Heart left ventricle (tissue), 16 donors: ENCODE measurements at regions of chr11 and their contacts with region 1.

Region 1: DNA sequence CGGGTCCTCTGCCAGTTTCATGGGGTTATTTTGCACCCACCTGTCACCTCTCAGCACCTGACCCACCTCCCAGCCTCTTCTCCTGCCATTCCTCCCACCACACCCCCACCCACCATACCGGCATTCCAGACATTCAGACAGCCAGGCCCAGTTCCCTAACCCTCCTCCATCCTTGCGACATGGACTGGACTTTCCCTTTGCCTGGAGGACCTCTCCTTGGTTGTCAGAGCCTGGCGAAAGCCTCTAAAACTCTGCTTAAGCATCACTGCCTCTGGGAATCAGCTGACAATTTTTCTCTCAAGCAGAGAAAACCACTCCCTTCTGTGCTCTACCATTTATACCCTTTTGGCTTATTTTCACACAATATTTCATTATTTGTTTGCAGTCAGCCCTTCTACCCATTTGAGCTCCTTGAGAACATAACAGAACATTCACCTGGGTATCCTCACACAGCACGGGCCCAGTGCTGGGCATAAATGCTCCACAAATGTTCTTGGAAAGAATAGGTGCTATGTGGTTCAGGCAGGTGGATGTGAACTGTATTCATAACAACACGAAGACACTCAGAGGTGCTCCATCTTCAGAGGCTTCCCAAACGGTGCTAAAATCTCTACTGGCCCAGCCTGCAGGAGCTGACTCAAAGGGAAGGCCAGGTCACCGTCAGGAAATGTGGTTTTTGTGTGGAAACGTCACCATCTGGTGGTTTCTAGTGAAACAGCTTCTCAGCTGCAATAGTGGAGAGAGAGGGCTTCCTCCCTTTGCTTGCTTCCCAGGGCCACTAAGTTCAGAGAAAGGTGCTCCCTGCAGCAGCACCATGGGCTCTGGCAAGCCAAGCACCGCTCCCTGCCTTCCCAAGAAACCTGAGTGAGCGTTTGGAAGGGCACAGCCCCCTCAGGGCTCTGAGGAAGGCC is 10.4 kb downstream of the SPATA19 start:
- DNase-seq: peak in 2 of 5 donors; percentile 44 to 50
- ATAC-seq: peak in 3 of 4 donors; percentile 69 to 90 (median 85)
- H3K4me3 ChIP-seq: no peak overlapping the region
- H3K27ac ChIP-seq: no peak overlapping the region
- H3K4me1 ChIP-seq: peaks cover 0 to 6% (median 0%) of the 10 kb centered on the region in 12 donors
- H3K27me3 ChIP-seq: peaks cover 0 to 16% (median 0%) of the 10 kb centered on the region in 9 donors
- CTCF ChIP-seq: peak; percentile 16 to 75 (median 65)
- POLR2A ChIP-seq: no peak

Region 2: GRCh38 chr11:133134314-133135173 is 700.4 kb before region 1 on chr11:
- intact Hi-C with region 1: loop called in 8 of 10 experiments (anchors 2 to 10 kb)
- DNase-seq: peak in 4 of 5 donors; percentile 49 to 55 (median 51)
- ATAC-seq: peak in 3 of 4 donors; percentile 72 to 83 (median 80)
- H3K4me3 ChIP-seq: no peak overlapping the region
- H3K27ac ChIP-seq: no peak overlapping the region
- H3K4me1 ChIP-seq: peaks cover 0 to 10% (median 0%) of the 10 kb centered on the region in 12 donors
- H3K27me3 ChIP-seq: peaks cover 0 to 14% (median 0%) of the 10 kb centered on the region in 9 donors
- CTCF ChIP-seq: peak; percentile 75 to 89 (median 82)
- POLR2A ChIP-seq: no peak

Region 3: DNA sequence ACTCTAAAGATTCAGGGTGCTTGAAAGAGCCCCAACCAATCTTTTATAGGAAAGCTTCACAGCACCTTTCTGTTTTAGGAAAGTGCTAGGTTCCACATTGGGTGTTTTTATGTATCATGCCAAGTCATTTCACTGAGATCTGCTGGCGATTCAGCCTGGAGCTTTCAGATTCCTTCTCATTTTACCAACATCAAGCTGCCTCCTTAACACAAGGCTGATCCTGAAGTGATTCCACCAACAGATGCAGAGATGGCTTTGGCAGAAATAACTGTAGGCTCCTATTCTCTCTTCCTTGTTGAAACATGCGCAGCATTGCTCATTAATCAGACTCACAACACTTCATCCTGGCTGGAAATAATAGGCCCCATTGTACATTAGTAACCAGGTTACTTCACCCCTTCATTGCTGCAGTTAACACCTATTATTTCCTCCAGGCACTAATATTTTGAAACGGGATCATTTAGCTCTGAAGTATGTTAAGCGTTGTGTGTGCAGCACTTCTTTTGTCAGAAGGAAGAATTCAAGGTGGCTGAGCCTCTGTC is 391.7 kb before region 1 on chr11:
- intact Hi-C with region 1: no loop called
- DNase-seq: no peak
- ATAC-seq: no peak
- H3K4me3 ChIP-seq: no peak overlapping the region
- H3K27ac ChIP-seq: no peak overlapping the region
- H3K4me1 ChIP-seq: no peaks in the 10 kb centered on the region
- H3K27me3 ChIP-seq: no peaks in the 10 kb centered on the region
- CTCF ChIP-seq: no peak
- POLR2A ChIP-seq: no peak

Region 4: DNA sequence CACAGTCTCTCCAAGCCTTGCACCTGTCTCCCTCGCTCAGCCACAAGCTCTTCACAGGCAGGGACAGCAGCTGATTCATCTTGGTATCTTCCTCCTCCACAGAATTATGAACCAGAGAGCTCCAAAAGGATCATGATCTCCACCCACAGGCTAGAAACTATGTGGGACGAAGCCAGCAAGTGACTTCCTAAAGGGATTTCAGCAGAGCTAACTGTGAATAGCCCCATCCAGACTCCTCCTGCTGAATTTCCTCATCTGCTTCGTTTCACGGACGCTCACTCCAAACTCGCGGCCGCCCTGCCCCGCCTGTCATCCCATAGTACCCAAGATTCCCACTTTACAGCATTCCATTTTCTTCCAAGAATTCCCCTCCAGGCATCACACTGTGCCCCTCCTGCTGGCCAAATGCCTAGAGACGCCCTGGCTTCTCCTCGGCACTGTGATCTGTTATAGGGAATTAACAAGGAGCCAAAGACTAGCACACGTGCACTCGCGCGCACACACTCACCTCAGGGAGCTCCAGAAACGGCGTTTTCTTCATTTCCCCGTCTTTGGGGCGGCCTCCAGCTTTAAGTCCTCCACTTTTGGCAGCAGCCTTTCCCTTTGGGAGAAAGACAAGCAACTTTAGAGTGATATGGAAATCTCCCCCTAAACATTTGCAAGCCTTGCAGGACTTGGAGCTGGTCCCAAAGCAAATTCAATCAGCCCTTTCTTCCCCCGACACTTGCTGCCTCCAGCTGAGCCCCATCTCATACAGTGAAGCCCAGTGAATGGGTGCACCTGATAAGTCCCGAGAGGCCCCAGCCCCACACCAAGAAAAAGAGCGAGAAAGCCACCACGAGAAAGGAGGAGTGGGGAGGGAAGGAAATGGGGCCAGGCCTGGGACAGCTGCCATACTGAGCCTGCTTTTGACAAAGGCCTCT is 25.1 kb before region 1 on chr11:
- intact Hi-C with region 1: no loop called
- DNase-seq: peak in 1 of 5 donors; percentile 21
- ATAC-seq: peak in 3 of 4 donors; percentile 55 to 80 (median 69)
- H3K4me3 ChIP-seq: peak overlapping the region in 2 of 12 donors; percentile 8 to 17
- H3K27ac ChIP-seq: no peak overlapping the region
- H3K4me1 ChIP-seq: peaks cover 0 to 10% (median 0%) of the 10 kb centered on the region in 12 donors
- H3K27me3 ChIP-seq: peaks cover 0 to 31% (median 3%) of the 10 kb centered on the region in 9 donors
- CTCF ChIP-seq: no peak
- POLR2A ChIP-seq: no peak